ENCODE measurements at regions of chr12 and their contacts with region 1.

Region 1: GRCh38 chr12:62813031-62813829 is 121.7 kb downstream of the PPM1H start:
- DNase-seq: peak; percentile 68
- H3K4me3 ChIP-seq: no peak overlapping the region
- H3K27ac ChIP-seq: no peak overlapping the region
- H3K4me1 ChIP-seq: peaks cover 4% of the 10 kb centered on the region
- H3K27me3 ChIP-seq: no peaks in the 10 kb centered on the region
- CTCF ChIP-seq: peak; percentile 82 to 90
- POLR2A ChIP-seq: no peak

Region 2: DNA sequence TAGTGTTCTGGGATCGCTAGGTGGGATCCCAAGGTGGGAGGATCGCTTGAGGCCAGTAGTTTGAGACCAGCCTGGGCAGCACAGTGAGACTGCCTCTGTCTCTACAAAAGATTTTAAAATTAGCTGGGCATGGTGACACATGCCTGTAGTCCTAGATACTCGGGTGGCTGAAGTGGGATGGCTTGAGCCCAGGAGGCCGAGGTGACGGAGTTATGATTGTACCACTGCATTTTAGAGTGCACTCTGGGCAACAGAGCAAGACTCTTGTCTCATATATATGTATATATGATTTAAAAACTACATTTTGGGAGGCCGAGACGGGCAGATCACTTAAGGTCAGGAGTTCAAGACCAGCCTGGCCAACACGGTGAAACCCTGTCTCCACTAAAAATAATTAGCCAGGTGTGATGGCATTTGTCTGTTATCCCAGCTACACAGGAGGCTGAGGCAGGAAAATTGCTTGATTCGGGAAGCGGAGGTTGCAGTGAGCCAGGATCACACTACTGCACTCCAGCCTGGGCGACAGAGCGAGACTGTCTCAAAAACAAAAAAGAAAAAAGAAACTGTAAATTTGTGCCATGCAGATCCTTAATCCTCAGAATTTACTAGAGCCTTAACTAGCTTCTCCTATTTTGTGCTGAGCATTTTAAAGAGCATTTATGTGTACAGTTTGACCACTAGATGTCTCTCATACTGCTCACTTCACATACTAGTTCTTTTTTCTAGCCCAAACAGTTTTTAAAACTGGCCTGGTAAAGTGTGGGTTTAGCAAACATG is 231.8 kb before region 1 on chr12:
- CTCF ChIA-PET with region 1: interaction called, 18 read pairs
- POLR2A ChIA-PET with region 1: no interaction called
- dilution Hi-C with region 1: no loop called
- intact Hi-C with region 1: no loop called
- DNase-seq: peak; percentile 58
- H3K4me3 ChIP-seq: no peak overlapping the region
- H3K27ac ChIP-seq: no peak overlapping the region
- H3K4me1 ChIP-seq: no peaks in the 10 kb centered on the region
- H3K27me3 ChIP-seq: no peaks in the 10 kb centered on the region
- CTCF ChIP-seq: peak; percentile 43 to 58
- POLR2A ChIP-seq: no peak

Region 3: DNA sequence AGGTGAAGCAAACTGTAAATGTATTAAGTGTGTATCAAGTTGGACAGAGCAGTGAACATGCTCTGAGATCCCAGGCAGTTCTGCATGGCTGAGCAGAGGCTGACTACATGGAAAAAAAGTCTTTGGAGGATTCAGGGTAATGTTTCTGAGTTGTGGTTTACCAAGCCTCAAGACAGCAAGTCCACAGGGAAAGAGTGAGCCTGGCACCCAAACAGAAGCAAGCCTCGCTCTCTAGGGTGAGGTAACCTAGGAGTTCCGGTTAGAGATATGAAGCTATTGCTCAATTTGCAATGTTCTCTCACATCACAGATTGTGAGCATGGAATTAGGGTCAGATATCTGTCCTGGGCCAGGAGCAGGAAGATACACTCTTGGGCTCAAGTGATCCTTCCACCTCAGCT is 188.0 kb before region 1 on chr12:
- CTCF ChIA-PET with region 1: no interaction called
- POLR2A ChIA-PET with region 1: no interaction called
- dilution Hi-C with region 1: no loop called
- intact Hi-C with region 1: no loop called
- DNase-seq: no peak
- H3K4me3 ChIP-seq: no peak overlapping the region
- H3K27ac ChIP-seq: no peak overlapping the region
- H3K4me1 ChIP-seq: no peaks in the 10 kb centered on the region
- H3K27me3 ChIP-seq: no peaks in the 10 kb centered on the region
- CTCF ChIP-seq: no peak
- POLR2A ChIP-seq: no peak

Region 4: DNA sequence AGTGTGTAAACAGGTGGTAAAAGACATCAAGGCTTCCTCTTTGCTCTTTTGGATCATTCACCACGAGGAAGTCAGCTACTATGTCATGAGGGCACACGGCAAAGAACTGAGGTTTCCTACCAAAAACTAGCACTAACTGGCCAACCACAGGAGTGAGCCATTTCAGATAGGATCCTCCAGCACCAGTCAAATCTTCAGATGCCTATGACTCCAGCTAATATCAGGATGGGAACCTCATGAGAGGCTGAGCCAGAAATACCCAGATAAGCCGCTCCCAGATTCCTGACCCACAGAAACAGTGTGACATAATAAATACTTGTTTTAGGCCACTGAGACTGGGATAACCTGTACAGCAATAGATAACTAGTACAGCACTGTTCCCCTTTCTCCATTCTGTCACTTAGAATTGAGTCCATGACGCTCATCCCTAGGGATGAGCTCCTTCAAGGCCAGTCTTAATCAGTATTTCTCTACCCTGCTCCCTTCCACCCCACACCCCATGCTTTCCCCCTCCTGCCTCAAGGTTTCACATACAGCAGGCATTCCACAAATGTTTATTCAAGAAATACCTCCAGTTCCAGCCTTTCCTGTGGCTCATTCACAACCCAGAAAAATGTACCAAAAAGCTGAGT is 53.3 kb after region 1 on chr12:
- CTCF ChIA-PET with region 1: no interaction called
- POLR2A ChIA-PET with region 1: no interaction called
- dilution Hi-C with region 1: no loop called
- intact Hi-C with region 1: loop called (anchors 2 kb)
- DNase-seq: peak; percentile 65
- H3K4me3 ChIP-seq: no peak overlapping the region
- H3K27ac ChIP-seq: peak overlapping the region; percentile 74
- H3K4me1 ChIP-seq: peaks cover 36% of the 10 kb centered on the region
- H3K27me3 ChIP-seq: no peaks in the 10 kb centered on the region
- CTCF ChIP-seq: no peak
- POLR2A ChIP-seq: no peak

Region 5: DNA sequence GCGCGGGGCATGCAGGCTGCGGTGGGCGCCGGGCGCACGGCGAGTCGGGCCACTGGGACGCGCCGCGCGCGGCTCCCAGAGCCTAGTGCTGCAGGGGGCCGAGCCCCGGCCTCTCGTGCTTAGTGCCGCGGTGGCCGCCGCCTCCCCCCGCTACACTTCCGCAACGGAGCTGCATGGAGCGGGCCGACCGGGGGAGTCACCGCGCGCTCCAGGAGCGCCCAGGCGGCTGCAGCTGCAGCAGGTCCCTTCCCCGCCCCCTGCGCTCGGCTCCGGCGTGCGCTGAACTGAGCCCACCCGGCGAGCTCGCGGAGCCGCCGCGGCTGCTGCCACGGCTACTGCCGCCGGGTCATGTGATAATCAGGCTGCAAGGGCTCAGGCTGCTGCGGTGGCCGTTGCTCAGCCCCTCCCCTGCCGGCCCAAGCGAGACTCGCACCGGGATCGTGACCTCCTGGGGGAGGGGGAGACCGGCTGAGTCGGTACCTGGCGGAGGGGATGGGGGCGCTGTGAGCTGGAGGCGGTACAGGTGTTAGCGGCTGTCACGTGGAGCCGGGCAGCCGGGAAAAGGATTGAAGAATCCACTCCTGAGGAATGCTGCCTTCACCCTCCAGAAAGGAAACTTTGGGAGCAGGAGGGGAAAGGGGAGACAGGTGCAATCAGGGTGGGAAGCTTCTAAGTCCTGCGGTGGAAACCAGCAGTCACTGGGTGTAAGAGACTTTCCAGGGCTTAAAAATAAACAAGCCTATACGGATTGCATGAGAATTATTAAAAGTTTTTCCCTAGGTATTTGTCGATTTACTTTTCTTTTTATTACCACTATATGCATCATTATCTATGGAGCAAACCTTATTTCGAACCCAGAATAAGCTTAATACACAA is 121.8 kb after region 1 on chr12 and contains the start of gene PPM1H:
- CTCF ChIA-PET with region 1: interaction called, 5 read pairs
- POLR2A ChIA-PET with region 1: no interaction called
- dilution Hi-C with region 1: no loop called
- intact Hi-C with region 1: loop called (anchors 1 kb)
- DNase-seq: peak; percentile 63
- H3K4me3 ChIP-seq: peak within 1 kb of the TSS; percentile 29 to 62 (median 57)
- H3K27ac ChIP-seq: no peak within 1 kb of the TSS
- H3K4me1 ChIP-seq: peaks cover 8% of the 10 kb centered on the region
- H3K27me3 ChIP-seq: peaks cover 15 to 23% of the 10 kb centered on the region in 2 experiments
- CTCF ChIP-seq: peak in 1 of 2 donors; percentile 52
- POLR2A ChIP-seq: no peak
- total RNA-seq, gene PPM1H: 4.9 and 7.2 TPM in 2 replicates

Region 6: DNA sequence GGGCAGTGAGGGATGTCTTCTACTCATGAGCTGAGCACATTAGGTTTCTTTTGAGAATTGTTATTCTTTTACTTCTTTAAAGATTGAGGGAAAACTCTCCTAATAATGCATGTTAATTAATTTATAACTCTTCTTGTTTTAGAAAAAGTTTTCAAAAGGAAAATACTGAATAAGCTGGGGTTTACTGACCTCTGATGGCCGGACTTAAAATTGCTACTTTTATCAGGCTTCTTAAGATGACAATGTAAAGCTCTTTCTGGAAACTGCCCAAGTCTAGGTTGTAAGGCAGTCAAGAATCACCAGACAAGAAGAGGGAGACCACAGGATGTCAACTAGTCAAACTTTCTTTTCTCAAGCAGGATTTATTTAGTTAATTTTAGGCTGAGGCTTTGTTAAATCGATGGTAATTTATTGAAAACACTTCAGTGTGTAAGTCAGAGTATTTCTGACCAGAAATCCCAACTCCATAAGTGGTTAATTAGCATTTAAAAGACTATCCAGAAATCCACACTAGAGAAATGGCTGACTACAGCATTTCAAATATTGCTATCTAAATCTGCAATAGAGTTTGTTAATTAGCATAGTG is 255.7 kb after region 1 on chr12:
- CTCF ChIA-PET with region 1: interaction called, 64 read pairs
- POLR2A ChIA-PET with region 1: no interaction called
- dilution Hi-C with region 1: no loop called
- intact Hi-C with region 1: loop called (anchors 1 kb)
- DNase-seq: peak; percentile 80
- H3K4me3 ChIP-seq: no peak overlapping the region
- H3K27ac ChIP-seq: no peak overlapping the region
- H3K4me1 ChIP-seq: no peaks in the 10 kb centered on the region
- H3K27me3 ChIP-seq: peaks cover 2% of the 10 kb centered on the region in 2 experiments
- CTCF ChIP-seq: peak; percentile 29 to 35
- POLR2A ChIP-seq: no peak